ENCODE measurements at regions of chr22 and their contacts with region 1.

Region 1: GRCh38 chr22:36331306-36331911 is 56.4 kb downstream of the MYH9 start:
- DNase-seq: peak; percentile 77
- H3K4me3 Mint-ChIP-seq: peak overlapping the region; percentile 86
- H3K27ac Mint-ChIP-seq: peak overlapping the region; percentile 98
- H3K4me1 Mint-ChIP-seq: peaks cover 99% of the 10 kb centered on the region
- H3K27me3 Mint-ChIP-seq: no peaks in the 10 kb centered on the region

Region 2: GRCh38 chr22:35910003-35910769 is 421.2 kb before region 1 on chr22:
- intact Hi-C with region 1: no loop called
- DNase-seq: no peak
- H3K4me3 Mint-ChIP-seq: no peak overlapping the region
- H3K27ac Mint-ChIP-seq: no peak overlapping the region
- H3K4me1 Mint-ChIP-seq: peaks cover 10% of the 10 kb centered on the region
- H3K27me3 Mint-ChIP-seq: peaks cover 4% of the 10 kb centered on the region

Region 3: GRCh38 chr22:36350751-36351594 is 19.6 kb after region 1 on chr22:
- intact Hi-C with region 1: no loop called
- DNase-seq: no peak
- H3K4me3 Mint-ChIP-seq: peak overlapping the region; percentile 17
- H3K27ac Mint-ChIP-seq: peak overlapping the region; percentile 86
- H3K4me1 Mint-ChIP-seq: peaks cover 74% of the 10 kb centered on the region
- H3K27me3 Mint-ChIP-seq: no peaks in the 10 kb centered on the region

Region 4: DNA sequence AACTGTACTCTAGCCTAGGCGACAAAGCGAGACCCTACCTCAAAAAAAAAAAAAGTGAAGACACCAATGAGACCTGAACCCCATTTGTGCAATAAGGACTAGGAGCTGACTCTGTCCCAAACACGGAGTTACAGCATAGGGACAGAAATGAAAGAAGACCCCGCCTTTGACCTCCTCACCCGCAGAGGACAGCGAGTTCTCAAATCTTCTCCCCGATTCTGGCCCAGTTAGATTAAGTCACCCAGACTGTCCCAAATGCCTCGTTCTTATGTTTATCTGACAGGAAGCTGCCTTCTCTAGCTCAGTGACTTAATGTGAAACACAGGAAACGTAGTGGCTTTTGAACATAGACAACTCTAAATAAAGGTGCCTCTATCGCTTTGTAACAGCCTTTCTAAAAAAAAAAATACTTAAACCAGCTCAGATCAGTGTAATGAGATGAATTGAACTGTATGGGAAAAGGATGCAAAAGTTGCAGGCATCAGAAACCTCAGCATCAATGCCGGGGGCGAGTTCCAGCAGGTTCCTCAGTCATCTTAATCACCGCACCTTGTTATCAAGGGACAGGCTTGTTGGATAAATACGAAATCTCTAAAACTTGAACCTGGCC is 45.7 kb after region 1 on chr22:
- intact Hi-C with region 1: loop called (anchors 2 kb)
- DNase-seq: peak; percentile 52
- H3K4me3 Mint-ChIP-seq: peak overlapping the region; percentile 87
- H3K27ac Mint-ChIP-seq: peak overlapping the region; percentile 99
- H3K4me1 Mint-ChIP-seq: peaks cover 91% of the 10 kb centered on the region
- H3K27me3 Mint-ChIP-seq: no peaks in the 10 kb centered on the region

Region 5: DNA sequence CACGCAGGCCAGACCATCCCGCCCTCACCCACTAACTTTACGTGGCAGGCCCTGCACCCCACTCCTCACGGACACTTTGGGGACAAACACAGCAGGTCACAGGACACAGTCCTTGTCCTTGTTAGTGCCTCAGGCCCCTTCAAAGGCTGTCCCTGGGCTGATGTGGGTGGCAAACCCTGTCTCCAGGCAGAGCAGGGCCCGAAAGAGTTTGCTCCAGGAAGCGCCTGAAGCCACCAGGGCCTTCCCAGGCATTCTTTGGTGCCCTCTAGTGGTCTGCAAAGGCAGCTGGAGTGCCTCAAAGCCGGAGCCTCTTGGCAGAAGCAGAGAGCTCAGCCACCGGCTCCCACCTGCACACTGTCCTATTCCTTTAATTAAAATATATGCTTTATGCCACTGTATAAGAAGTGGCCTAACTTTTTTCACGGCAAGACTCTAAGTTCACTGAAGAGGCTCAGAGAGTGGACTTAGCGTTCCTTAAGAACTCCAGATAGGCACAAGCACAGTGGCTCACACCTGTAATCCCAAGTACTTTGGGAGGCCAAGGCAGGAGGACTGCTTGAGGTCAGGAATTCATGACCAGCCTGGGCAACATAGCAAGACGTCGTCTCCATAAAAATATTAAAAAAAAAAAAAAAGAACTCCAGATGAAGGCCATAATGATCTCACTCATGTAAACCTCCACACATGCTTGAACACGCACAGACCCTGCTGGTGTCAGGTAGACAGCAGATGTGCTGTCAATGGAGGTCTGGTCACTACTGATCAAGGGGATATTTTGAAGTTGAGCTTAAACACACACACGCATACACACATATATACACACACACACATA is 139.0 kb after region 1 on chr22:
- intact Hi-C with region 1: loop called (anchors 1 kb)
- DNase-seq: peak; percentile 79
- H3K4me3 Mint-ChIP-seq: no peak overlapping the region
- H3K27ac Mint-ChIP-seq: no peak overlapping the region
- H3K4me1 Mint-ChIP-seq: peaks cover 27% of the 10 kb centered on the region
- H3K27me3 Mint-ChIP-seq: no peaks in the 10 kb centered on the region

Measured in activated T-helper 1 cell treated with anti-CD3 and anti-CD28 coated beads, Interleukin-12 subunit alpha, Interleukin-12 subunit beta, Interleukin-2, Interleukin-4 antibody, amounts not matched to agents 30 ng/mL and 10 ng/mL and 1 ng/mL, durations not matched to agents 14 hours and 24 hours and 36 hours (primary cell).